ENCODE measurements at regions of chr3 and their contacts with region 1.

Region 1: GRCh38 chr3:139074565-139075115 is 29.9 kb upstream of the PRR23C start:
- H3K4me3 Mint-ChIP-seq: no peak overlapping the region
- H3K27ac Mint-ChIP-seq: no peak overlapping the region
- H3K4me1 Mint-ChIP-seq: no peaks in the 10 kb centered on the region
- H3K27me3 Mint-ChIP-seq: peaks cover 6% of the 10 kb centered on the region

Region 2: GRCh38 chr3:138256022-138256421 is 818.6 kb before region 1 on chr3:
- intact Hi-C with region 1: no loop called
- H3K4me3 Mint-ChIP-seq: no peak overlapping the region
- H3K27ac Mint-ChIP-seq: no peak overlapping the region
- H3K4me1 Mint-ChIP-seq: no peaks in the 10 kb centered on the region
- H3K27me3 Mint-ChIP-seq: no peaks in the 10 kb centered on the region

Region 3: DNA sequence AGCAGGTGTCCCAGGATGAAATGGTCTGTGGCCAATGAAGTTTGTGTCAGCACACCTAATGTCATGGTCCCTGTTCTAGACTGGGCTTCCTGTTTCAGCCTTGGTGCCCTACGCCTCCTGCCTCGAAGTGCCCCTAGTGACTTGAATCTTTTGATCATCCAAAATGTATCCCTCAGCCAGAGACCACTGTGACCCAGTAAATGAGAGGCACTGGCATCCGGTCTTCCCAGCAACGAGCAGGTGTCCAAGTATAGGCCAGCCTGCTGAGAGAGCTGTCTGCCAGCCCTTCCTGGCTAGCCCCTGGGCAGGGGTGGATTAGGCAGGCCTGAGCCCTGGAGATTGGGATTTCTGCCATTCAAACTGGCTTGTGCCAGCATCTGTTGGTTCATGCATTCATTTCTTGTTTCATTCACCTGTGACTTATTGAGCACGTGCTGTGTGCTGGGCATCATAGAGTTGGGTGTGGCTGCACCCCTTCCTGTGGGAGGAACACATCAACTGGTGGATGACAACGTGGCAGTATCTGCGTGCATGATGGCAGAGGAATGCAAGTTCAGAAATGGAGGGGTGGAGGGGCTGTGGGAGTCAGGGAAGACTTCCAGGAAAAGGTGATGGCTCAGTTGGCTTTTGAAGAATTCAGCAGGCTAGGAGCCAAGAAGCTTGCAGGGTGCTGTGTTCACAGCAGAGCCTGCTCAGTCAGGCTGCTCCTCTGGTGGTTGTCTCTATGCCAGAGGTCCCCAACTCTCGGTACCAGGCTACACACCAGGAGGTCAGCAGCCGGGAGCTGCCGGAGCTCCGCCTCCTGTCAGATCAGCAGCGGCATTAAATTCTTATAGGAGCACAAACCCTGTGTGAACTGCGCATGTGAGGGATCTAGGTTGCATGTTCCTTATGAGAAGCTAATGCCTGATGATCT is 618.6 kb before region 1 on chr3:
- intact Hi-C with region 1: no loop called
- H3K4me3 Mint-ChIP-seq: no peak overlapping the region
- H3K27ac Mint-ChIP-seq: no peak overlapping the region
- H3K4me1 Mint-ChIP-seq: peaks cover 5% of the 10 kb centered on the region
- H3K27me3 Mint-ChIP-seq: no peaks in the 10 kb centered on the region

Region 4: DNA sequence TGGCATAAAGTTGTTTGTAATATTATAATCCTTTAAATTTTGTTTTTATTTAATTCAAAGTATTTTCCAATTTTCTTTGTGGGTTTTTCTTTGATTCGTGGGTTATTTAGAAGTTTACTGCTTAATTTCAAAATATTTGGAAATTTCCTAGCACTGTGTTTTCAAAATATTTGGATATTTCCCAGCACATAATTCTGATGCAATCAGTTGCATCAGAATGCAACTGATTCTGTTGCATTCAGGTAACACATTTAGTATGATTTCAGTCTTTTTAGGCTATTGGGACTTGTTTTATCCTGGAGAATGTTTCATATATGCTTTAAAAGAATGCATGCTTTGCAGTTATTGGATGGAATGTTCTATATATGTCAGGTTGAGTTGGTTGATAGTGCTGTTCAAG is 11.7 kb before region 1 on chr3:
- intact Hi-C with region 1: loop called (anchors 1 kb)
- H3K4me3 Mint-ChIP-seq: no peak overlapping the region
- H3K27ac Mint-ChIP-seq: no peak overlapping the region
- H3K4me1 Mint-ChIP-seq: no peaks in the 10 kb centered on the region
- H3K27me3 Mint-ChIP-seq: no peaks in the 10 kb centered on the region

Region 5: GRCh38 chr3:139088462-139089324 is 14.1 kb after region 1 on chr3:
- intact Hi-C with region 1: no loop called
- H3K4me3 Mint-ChIP-seq: no peak overlapping the region
- H3K27ac Mint-ChIP-seq: no peak overlapping the region
- H3K4me1 Mint-ChIP-seq: no peaks in the 10 kb centered on the region
- H3K27me3 Mint-ChIP-seq: peaks cover 6% of the 10 kb centered on the region

Region 6: GRCh38 chr3:140724856-140725812 is 1650.5 kb after region 1 on chr3:
- intact Hi-C with region 1: no loop called
- H3K4me3 Mint-ChIP-seq: no peak overlapping the region
- H3K27ac Mint-ChIP-seq: no peak overlapping the region
- H3K4me1 Mint-ChIP-seq: no peaks in the 10 kb centered on the region
- H3K27me3 Mint-ChIP-seq: peaks cover 7% of the 10 kb centered on the region

Measured in dendritic cell treated with granulocyte-macrophage colony-stimulating factor and Interleukin-4, amounts not matched to agents 40 ng/mL and 50 ng/mL, for 4 days (primary cell).